Posterior cingulate gyrus (tissue), 11 donors: ENCODE measurements at regions of chr4 and their contacts with region 1.

Region 1: GRCh38 chr4:68175562-68176155 is 46.0 kb upstream of the TMPRSS11F start:
- DNase-seq: peak in 3 of 10 donors; percentile 23 to 53 (median 45)

Region 2: GRCh38 chr4:67545199-67546003 is 630.3 kb before region 1 on chr4 and contains the start of gene CENPC:
- intact Hi-C with region 1: loop called (anchors 5 kb)
- DNase-seq: peak; percentile 93 to 99 (median 96)

Region 3: DNA sequence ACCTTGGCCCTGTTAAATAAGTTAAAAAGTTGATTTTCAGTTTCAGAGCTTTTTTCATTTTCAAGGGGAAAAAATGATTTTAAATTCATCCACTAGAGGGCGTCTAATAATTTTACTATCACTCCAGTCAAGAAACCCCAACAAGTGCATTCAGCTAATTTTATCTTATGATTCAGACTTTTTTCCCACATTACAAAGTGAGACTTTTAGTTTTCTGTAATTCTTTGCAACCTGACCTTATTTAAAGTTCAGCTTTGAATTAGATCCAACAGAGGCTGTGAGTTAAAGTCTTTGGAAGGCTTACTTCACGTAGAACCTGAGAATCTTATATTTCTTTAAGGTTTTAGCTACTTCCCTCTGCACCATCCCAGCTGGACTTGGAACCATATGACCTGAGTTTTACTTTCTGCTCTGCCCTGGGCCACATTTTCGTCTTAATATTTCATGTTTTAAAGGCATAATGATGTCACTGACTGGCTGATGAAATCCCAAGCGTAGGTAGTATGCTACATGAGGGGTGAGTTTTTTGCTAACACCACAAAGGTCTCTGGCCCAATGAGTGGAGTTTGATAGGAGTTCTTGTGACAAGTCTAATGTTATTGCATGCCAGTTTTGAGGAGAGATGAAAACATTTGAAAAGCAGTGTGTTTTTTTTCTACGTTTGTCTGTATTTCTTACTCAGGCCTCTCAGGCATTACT is 428.7 kb before region 1 on chr4:
- intact Hi-C with region 1: loop called (anchors 5 kb)
- DNase-seq: no peak

Region 4: GRCh38 chr4:67871867-67872266 is 303.8 kb before region 1 on chr4:
- intact Hi-C with region 1: loop called (anchors 2 kb)
- DNase-seq: no peak

Region 5: GRCh38 chr4:67988991-67989390 is 186.7 kb before region 1 on chr4:
- intact Hi-C with region 1: loop called (anchors 1 kb)
- DNase-seq: no peak

Region 6: GRCh38 chr4:68748181-68748991 is 572.7 kb after region 1 on chr4:
- intact Hi-C with region 1: no loop called
- DNase-seq: no peak